BJ (cell line): ENCODE measurements at regions of chr15 and their contacts with region 1.

Region 1: DNA sequence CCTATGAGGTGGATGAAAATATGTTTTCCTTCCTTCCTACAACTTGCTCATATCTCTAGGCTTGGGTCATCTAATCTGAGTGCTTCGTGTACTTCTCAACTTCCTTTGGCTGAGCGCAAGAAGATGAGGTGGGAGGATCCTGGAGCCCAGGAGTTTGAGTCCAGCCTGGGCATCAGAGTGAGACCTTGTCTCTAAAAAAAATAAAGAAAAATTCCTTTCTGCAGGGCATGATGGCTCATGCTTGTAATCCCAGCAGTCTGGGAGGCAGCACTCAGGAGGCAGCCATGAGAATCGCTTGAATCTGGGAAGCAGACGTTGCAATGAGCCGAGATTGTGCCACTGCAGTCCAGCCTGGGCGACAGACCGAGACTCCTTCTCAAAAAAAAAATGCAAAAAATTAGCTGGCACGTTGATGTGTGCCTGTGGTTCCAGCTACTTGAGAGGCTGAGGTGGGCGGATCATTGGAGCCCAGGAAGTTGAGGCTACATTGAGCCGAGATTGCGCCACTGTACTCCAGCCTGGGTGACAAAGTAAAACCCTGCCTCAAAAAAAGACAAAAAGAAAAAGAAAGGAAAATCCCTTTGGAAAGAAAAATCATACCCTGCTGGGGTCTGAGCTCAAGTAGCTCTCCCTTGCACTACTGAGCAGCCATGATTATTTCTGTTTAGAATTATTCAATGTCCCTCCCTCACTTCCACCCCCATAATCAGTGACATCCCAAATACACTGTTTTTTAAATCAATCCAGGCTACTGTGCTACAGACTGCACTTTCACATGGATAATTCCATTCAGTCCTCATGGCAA is 28.0 kb upstream of the RAB11A start:
- DNase-seq: no peak
- H3K4me3 ChIP-seq: peak overlapping the region; percentile 1; the same call in 1 of the 2 replicates
- H3K27me3 ChIP-seq: no peaks in the 10 kb centered on the region
- CTCF ChIP-seq: no peak

Region 2: DNA sequence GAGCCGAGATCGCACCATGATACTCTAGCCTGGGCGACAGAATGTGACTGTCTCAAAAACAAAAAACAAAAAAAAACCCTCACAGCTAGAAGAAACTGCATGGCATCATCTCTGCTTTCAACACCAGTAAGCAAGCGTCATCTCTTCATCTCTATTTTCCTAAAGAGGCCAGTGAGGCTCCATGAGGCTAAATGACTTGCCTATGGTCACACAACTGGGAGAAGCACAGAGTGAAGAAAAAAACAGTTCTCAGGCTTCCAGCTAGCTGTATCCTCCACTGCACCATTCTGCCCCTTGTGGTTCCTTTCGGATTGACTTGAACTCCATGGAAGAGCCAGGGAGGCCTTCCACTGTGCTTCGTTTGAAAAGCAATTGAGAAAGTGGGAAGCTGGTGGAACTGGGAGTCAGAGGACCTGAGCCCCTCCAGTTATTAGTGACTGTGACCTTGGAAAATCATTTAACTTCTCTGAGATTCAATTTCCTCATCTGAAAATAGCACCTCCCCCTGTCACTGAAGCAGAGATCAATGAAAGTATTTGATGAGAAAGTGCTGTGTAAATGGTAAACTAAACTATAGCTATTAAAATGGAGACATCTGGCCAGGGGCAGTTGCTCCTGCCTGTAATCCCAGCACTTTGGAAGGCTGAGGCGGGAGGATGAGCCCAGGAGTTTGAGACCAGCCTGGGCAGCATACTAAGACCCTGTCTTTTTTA is 17.1 kb before region 1 on chr15:
- CTCF ChIA-PET with region 1: interaction called, 15 read pairs
- POLR2A ChIA-PET with region 1: interaction called, 5 read pairs
- DNase-seq: no peak
- H3K4me3 ChIP-seq: no peak overlapping the region
- H3K27me3 ChIP-seq: no peaks in the 10 kb centered on the region
- CTCF ChIP-seq: peak; percentile 76